WTC11 (cell line): ENCODE measurements at regions of chr19 and their contacts with region 1.

Region 1: DNA sequence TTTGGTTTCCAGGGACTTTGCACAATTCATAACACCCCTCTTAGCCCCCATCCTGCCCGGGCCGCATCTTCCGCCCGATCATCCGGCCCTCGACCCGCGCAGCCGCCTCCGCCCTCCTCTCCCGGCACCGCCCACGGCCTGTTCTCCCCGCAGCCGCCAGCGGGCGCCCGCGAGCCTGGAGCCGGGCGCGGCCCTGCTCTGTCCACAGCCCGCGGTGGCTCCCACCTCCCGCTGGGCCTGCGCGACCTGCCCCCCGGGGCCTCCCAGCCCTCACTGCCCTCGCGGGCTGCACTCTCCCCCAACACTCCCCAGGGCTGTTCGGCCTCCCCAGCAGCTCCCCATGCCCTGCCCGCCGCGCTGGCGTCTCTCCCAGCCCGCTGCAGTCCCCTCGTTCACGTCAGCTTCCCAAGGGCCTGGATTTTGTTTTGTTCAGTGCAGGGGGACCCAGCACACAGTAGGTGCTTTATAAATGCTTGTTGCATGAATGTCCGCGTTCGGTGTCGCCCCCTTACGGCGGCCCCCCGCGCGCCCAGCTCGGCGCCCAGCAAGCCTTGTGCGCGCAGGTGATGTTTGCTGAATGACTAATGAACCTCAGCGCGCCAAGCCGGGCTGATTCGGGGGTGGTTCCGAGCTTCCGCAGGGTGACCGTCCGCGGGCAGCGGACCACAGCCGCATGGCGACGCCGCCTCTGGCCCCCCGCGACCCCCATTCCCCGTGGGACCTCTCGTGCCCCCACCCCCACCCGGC is 4.6 kb upstream of the APC2 start:
- DNase-seq: peak; percentile 82
- ATAC-seq: peak; percentile 56
- H3K4me3 Mint-ChIP-seq: peak overlapping the region; percentile 69
- H3K27ac Mint-ChIP-seq: no peak overlapping the region
- H3K4me1 Mint-ChIP-seq: peaks cover 19% of the 10 kb centered on the region
- H3K27me3 Mint-ChIP-seq: peaks cover 38% of the 10 kb centered on the region
- CTCF ChIP-seq: peak; percentile 88

Region 2: DNA sequence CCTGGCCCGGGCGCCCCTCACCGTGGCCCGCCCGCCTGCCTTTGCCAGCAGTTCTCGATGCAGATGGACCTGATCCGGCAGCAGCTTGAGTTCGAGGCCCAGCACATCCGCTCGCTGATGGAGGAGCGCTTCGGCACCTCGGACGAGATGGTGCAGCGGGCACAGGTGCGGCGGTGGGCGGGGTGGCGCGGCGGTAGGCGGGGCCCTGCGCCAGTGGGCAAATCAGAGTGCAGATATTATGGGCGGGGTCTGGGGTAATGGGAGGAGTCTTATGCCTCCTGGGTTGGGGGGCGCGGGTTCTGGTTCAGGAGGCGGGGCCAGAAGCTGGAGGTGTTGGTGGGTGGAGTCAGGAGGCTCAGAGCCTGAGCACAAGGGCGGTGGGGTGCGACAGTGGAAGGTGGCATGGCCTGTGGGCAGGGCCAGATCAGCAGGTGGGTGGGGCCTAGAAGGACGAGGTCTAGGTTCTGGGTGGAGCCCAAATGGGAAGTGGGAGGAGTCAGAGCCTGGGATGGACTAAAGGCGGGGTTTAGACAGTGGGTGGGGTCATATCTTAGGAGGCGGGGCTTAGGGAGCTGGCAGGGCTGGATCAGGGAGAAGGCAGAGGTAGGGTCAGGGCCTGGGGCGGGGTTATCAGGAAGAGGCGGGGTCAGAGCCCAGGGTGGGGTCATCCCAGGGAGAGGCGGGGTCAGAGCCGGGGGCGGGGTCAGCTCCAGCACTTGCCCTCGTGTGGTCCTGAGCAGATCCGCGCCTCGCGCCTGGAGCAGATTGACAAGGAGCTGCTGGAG is 10.2 kb after region 1 on chr19:
- CTCF ChIA-PET with region 1: interaction called, 41 read pairs
- POLR2A ChIA-PET with region 1: interaction called, 8 read pairs
- DNase-seq: peak; percentile 99
- ATAC-seq: peak; percentile 88
- H3K4me3 Mint-ChIP-seq: peak overlapping the region; percentile 47
- H3K27ac Mint-ChIP-seq: no peak overlapping the region
- H3K4me1 Mint-ChIP-seq: peaks cover 6% of the 10 kb centered on the region; the same call in 1 of the 2 replicates
- H3K27me3 Mint-ChIP-seq: peaks cover 55% of the 10 kb centered on the region
- CTCF ChIP-seq: no peak

Region 3: GRCh38 chr19:1465191-1466016 is 20.0 kb after region 1 on chr19:
- CTCF ChIA-PET with region 1: interaction called, 56 read pairs
- POLR2A ChIA-PET with region 1: interaction called, 3 read pairs
- DNase-seq: peak; percentile 74
- ATAC-seq: peak; percentile 20
- H3K4me3 Mint-ChIP-seq: no peak overlapping the region
- H3K27ac Mint-ChIP-seq: no peak overlapping the region
- H3K4me1 Mint-ChIP-seq: peaks cover 2% of the 10 kb centered on the region; the same call in 1 of the 2 replicates
- H3K27me3 Mint-ChIP-seq: peaks cover 64% of the 10 kb centered on the region
- CTCF ChIP-seq: no peak

Region 4: GRCh38 chr19:1470203-1471009 is 25.0 kb after region 1 on chr19:
- CTCF ChIA-PET with region 1: interaction called, 56 read pairs
- POLR2A ChIA-PET with region 1: interaction called, 3 read pairs
- DNase-seq: peak; percentile 77
- ATAC-seq: peak; percentile 24
- H3K4me3 Mint-ChIP-seq: peak overlapping the region; percentile 61
- H3K27ac Mint-ChIP-seq: no peak overlapping the region
- H3K4me1 Mint-ChIP-seq: peaks cover 5% of the 10 kb centered on the region; the same call in 1 of the 2 replicates
- H3K27me3 Mint-ChIP-seq: peaks cover 61% of the 10 kb centered on the region
- CTCF ChIP-seq: no peak

Region 5: DNA sequence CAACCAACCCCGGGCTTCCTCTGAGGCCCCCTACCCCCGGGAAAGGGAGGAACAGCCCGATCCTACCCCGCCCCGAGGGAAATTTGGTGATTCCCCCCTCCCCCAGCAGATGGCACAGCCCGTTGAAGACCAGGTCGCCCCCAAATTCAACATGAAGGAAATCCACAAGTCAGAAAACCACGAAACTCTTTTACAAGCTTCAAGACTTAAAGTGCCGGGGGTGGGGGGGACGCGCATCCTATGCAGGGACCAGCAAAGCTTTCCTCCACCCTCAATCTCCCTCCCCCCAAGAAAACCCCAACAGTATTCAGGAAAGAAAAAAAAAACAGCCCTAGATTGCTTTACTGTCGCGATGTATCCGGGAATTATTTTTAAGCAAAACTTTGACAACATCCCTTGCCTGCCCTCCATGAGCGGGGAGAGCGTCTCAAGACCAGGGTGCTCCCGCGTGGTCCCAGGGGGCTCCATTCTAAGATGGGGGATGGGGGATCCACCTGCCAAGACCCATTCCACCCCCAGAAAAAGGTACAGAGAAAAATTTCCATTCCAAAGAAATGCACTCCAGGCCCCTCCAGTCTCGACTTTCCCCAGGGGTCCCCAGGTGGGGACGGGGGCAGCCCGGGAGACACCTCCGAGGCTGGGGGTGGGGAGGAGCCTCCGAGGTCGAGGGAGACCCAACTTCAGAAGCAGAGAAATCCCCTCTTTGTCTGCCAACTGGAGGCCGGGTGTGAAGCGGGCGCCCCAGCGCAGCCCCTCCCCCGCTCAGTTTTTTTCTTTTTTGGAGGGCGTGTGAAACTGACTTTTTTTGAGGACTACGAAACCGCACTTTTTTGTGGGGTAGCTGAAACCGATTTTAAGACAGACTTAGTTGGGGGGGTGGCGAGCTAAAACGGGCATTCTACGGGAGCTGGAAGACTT is 205.6 kb after region 1 on chr19:
- CTCF ChIA-PET with region 1: no interaction called
- POLR2A ChIA-PET with region 1: no interaction called
- DNase-seq: peak; percentile 61
- ATAC-seq: peak; percentile 5
- H3K4me3 Mint-ChIP-seq: peak overlapping the region; percentile 94
- H3K27ac Mint-ChIP-seq: peak overlapping the region; percentile 95
- H3K4me1 Mint-ChIP-seq: peaks cover 5% of the 10 kb centered on the region
- H3K27me3 Mint-ChIP-seq: no peaks in the 10 kb centered on the region
- CTCF ChIP-seq: no peak